ENCODE measurements at regions of chr10 and their contacts with region 1.

Region 1: DNA sequence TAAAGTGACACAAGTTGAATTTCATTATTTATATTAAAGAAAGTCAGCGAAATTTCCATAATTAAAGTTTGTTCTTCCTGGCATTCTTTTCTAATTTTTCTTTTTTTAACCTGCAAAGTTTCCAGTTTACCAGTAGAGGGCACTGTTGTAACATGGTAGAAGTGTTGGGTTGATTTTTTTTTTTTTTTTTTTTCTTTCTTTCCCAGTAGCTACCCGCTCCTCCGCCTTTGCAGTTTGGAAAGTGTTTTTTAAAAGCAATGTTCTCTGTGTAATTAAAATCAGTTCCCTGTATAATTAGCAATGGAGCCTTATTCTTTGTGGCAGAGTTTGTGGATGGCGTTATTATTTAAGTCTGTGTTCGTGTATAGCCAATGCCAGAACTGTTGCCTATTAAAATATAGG is 53.7 kb downstream of the TAF3 start:
- DNase-seq: no peak
- ATAC-seq: no peak
- H3K4me3 ChIP-seq: peak overlapping the region in 9 of 12 donors; percentile 15 to 50 (median 35)
- H3K27ac ChIP-seq: no peak overlapping the region
- H3K4me1 ChIP-seq: peaks cover 0 to 4% (median 0%) of the 10 kb centered on the region in 12 donors
- H3K27me3 ChIP-seq: no peaks in the 10 kb centered on the region
- CTCF ChIP-seq: peak; percentile 63 to 90 (median 80)
- POLR2A ChIP-seq: no peak

Region 2: GRCh38 chr10:7551950-7552716 is 319.9 kb before region 1 on chr10:
- intact Hi-C with region 1: no loop called
- DNase-seq: peak in 3 of 5 donors; percentile 37 to 63 (median 55)
- ATAC-seq: peak; percentile 28 to 72 (median 66)
- H3K4me3 ChIP-seq: no peak overlapping the region
- H3K27ac ChIP-seq: peak overlapping the region in 8 of 12 donors; percentile 6 to 77 (median 46)
- H3K4me1 ChIP-seq: peaks cover 0 to 33% (median 9%) of the 10 kb centered on the region in 12 donors
- H3K27me3 ChIP-seq: no peaks in the 10 kb centered on the region
- CTCF ChIP-seq: no peak
- POLR2A ChIP-seq: no peak

Region 3: GRCh38 chr10:7932301-7933036 is 60.4 kb after region 1 on chr10:
- intact Hi-C with region 1: no loop called
- DNase-seq: no peak
- ATAC-seq: no peak
- H3K4me3 ChIP-seq: no peak overlapping the region
- H3K27ac ChIP-seq: no peak overlapping the region
- H3K4me1 ChIP-seq: peaks cover 0 to 9% (median 0%) of the 10 kb centered on the region in 12 donors
- H3K27me3 ChIP-seq: no peaks in the 10 kb centered on the region
- CTCF ChIP-seq: no peak
- POLR2A ChIP-seq: no peak

Region 4: DNA sequence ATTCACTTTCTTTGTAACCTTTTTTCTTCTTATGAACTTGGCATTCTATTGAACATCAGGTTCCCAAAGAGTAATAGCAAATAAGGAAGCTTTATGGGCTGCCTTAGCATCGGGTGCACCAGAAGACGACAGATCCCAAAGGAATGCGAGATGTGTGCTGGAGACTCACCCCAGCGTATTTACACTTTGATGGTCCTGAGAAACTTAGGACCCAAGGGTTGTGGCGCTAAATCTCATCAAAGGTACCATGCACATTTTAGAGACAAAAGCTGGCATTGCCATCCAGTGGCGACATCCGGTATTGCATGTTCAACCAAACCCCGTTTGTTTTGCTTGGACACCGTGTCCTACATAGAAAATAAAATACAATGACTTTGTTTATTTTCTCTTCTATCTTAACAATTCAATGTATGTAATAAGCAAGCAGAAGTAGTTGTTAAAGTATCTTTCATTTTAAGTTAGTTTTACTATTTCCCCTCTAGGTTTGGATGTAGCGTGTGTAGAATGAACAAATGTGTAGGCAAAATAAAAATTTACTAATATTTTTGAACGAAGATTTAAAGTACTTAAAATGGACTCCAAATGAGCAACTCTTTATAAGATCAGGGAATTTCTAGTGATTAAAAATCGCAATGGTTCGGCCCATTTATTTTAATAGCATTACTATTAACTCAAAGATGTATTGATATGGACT is 1337.2 kb after region 1 on chr10:
- intact Hi-C with region 1: loop called (anchors 2 to 5 kb)
- DNase-seq: peak; percentile 24 to 56 (median 35)
- ATAC-seq: peak in 1 of 4 donors; percentile 47
- H3K4me3 ChIP-seq: no peak overlapping the region
- H3K27ac ChIP-seq: no peak overlapping the region
- H3K4me1 ChIP-seq: no peaks in the 10 kb centered on the region
- H3K27me3 ChIP-seq: peaks cover 0 to 10% (median 0%) of the 10 kb centered on the region in 9 donors
- CTCF ChIP-seq: peak; percentile 82 to 95 (median 88)
- POLR2A ChIP-seq: no peak

Region 5: GRCh38 chr10:9214618-9215017 is 1342.6 kb after region 1 on chr10:
- intact Hi-C with region 1: loop called in 9 of 10 experiments (anchors 2 to 5 kb)
- DNase-seq: no peak
- ATAC-seq: no peak
- H3K4me3 ChIP-seq: no peak overlapping the region
- H3K27ac ChIP-seq: no peak overlapping the region
- H3K4me1 ChIP-seq: no peaks in the 10 kb centered on the region
- H3K27me3 ChIP-seq: peaks cover 0 to 18% (median 0%) of the 10 kb centered on the region in 9 donors
- CTCF ChIP-seq: no peak
- POLR2A ChIP-seq: no peak

Region 6: GRCh38 chr10:9294865-9295264 is 1422.8 kb after region 1 on chr10:
- intact Hi-C with region 1: loop called (anchors 5 to 10 kb)
- DNase-seq: no peak
- ATAC-seq: no peak
- H3K4me3 ChIP-seq: no peak overlapping the region
- H3K27ac ChIP-seq: no peak overlapping the region
- H3K4me1 ChIP-seq: peaks cover 0 to 4% (median 0%) of the 10 kb centered on the region in 12 donors
- H3K27me3 ChIP-seq: peaks cover 0 to 15% (median 0%) of the 10 kb centered on the region in 9 donors
- CTCF ChIP-seq: no peak
- POLR2A ChIP-seq: no peak

Region 7: GRCh38 chr10:9302120-9302746 is 1430.2 kb after region 1 on chr10:
- intact Hi-C with region 1: loop called (anchors 5 to 10 kb)
- DNase-seq: no peak
- ATAC-seq: peak in 1 of 4 donors; percentile 45
- H3K4me3 ChIP-seq: no peak overlapping the region
- H3K27ac ChIP-seq: no peak overlapping the region
- H3K4me1 ChIP-seq: no peaks in the 10 kb centered on the region
- H3K27me3 ChIP-seq: peaks cover 0 to 5% (median 0%) of the 10 kb centered on the region in 9 donors
- CTCF ChIP-seq: peak; percentile 14 to 56 (median 44)
- POLR2A ChIP-seq: no peak

Measured in heart left ventricle (tissue), 16 donors.